ENCODE measurements at regions of chr22 and their contacts with region 1.

Region 1: GRCh38 chr22:40346178-40347118 is at the start of gene ADSL:
- DNase-seq: peak; percentile 90
- ATAC-seq: peak; percentile 92
- H3K4me3 Mint-ChIP-seq: peak within 1 kb of the TSS; percentile 99
- H3K27ac Mint-ChIP-seq: peak within 1 kb of the TSS; percentile 99
- H3K4me1 Mint-ChIP-seq: peaks cover 50% of the 10 kb centered on the region
- H3K27me3 Mint-ChIP-seq: no peaks in the 10 kb centered on the region
- total RNA-seq, gene ADSL: 98.3 to 109 TPM

Region 2: GRCh38 chr22:40036591-40037225 is 309.7 kb before region 1 on chr22:
- CTCF ChIA-PET with region 1: interaction called, 16 read pairs
- DNase-seq: peak; percentile 71
- ATAC-seq: peak; percentile 84
- H3K4me3 Mint-ChIP-seq: no peak overlapping the region
- H3K27ac Mint-ChIP-seq: no peak overlapping the region
- H3K4me1 Mint-ChIP-seq: peaks cover 7% of the 10 kb centered on the region
- H3K27me3 Mint-ChIP-seq: peaks cover 22% of the 10 kb centered on the region

Region 3: DNA sequence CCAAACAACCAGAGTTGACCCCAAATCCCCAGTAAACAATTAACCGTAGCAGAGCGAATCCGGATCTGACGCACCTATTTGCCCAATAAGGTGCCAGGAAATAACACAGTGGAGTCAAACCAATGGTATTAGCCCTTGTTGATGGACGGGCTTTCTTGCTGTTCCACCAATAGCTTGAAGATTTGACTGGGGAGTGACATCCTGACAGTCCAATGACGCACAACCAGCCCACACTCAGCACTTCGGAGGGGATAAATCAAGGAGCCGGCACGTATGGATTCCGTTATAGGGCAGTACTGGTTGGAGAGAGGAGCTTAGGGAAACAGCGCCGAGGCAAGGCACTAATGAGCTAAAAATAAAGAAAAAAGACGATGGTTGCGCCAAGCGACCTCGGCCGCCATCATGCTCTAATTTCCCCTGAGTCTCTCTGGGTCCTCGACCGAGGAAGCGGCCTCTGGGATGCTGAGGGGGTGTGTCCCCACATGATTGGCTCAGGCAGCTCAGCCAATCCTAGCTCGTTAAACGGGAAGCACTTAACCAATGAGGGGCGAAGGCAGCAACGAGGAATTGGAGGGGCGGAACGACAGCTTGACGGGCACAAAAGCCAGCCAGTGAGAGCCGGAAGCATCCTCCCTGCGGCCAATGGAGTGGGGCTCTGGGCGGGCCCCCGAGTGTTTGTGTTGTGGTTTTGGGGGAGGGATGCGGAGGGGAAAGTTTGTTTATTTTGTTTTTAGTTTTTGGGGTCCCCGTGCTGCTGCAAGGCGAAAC is 302.2 kb before region 1 on chr22:
- CTCF ChIA-PET with region 1: interaction called, 30 read pairs
- DNase-seq: peak; percentile 99
- ATAC-seq: peak; percentile 90
- H3K4me3 Mint-ChIP-seq: peak overlapping the region; percentile 84
- H3K27ac Mint-ChIP-seq: peak overlapping the region; percentile 97
- H3K4me1 Mint-ChIP-seq: peaks cover 37% of the 10 kb centered on the region
- H3K27me3 Mint-ChIP-seq: peaks cover 6% of the 10 kb centered on the region

Region 4: GRCh38 chr22:40107244-40107643 is 239.2 kb before region 1 on chr22:
- CTCF ChIA-PET with region 1: no interaction called
- DNase-seq: no peak
- ATAC-seq: peak; percentile 35
- H3K4me3 Mint-ChIP-seq: peak overlapping the region; percentile 67
- H3K27ac Mint-ChIP-seq: peak overlapping the region; percentile 92
- H3K4me1 Mint-ChIP-seq: peaks cover 50% of the 10 kb centered on the region
- H3K27me3 Mint-ChIP-seq: no peaks in the 10 kb centered on the region

Region 5: GRCh38 chr22:40300884-40301672 is 45.4 kb before region 1 on chr22:
- CTCF ChIA-PET with region 1: interaction called, 15 read pairs
- DNase-seq: no peak
- ATAC-seq: peak; percentile 69
- H3K4me3 Mint-ChIP-seq: no peak overlapping the region
- H3K27ac Mint-ChIP-seq: peak overlapping the region; percentile 61
- H3K4me1 Mint-ChIP-seq: peaks cover 24% of the 10 kb centered on the region
- H3K27me3 Mint-ChIP-seq: no peaks in the 10 kb centered on the region

Region 6: GRCh38 chr22:40323681-40324171 is 22.7 kb before region 1 on chr22:
- CTCF ChIA-PET with region 1: interaction called, 19 read pairs
- DNase-seq: peak; percentile 66
- ATAC-seq: peak; percentile 41
- H3K4me3 Mint-ChIP-seq: peak overlapping the region; percentile 72
- H3K27ac Mint-ChIP-seq: peak overlapping the region; percentile 96
- H3K4me1 Mint-ChIP-seq: peaks cover 57% of the 10 kb centered on the region
- H3K27me3 Mint-ChIP-seq: no peaks in the 10 kb centered on the region

Region 7: GRCh38 chr22:40334899-40335298 is 11.5 kb before region 1 on chr22:
- CTCF ChIA-PET with region 1: interaction called, 25 read pairs
- DNase-seq: no peak
- ATAC-seq: no peak
- H3K4me3 Mint-ChIP-seq: peak overlapping the region; percentile 9
- H3K27ac Mint-ChIP-seq: peak overlapping the region; percentile 80
- H3K4me1 Mint-ChIP-seq: peaks cover 71% of the 10 kb centered on the region
- H3K27me3 Mint-ChIP-seq: no peaks in the 10 kb centered on the region

Region 8: GRCh38 chr22:40533712-40534378 is 187.4 kb after region 1 on chr22:
- CTCF ChIA-PET with region 1: no interaction called
- DNase-seq: peak; percentile 81
- ATAC-seq: peak; percentile 89
- H3K4me3 Mint-ChIP-seq: peak overlapping the region; percentile 79
- H3K27ac Mint-ChIP-seq: peak overlapping the region; percentile 91
- H3K4me1 Mint-ChIP-seq: peaks cover 60% of the 10 kb centered on the region
- H3K27me3 Mint-ChIP-seq: no peaks in the 10 kb centered on the region

Measured in activated CD8-positive, alpha-beta memory T cell treated with anti-CD3 and anti-CD28 coated beads, Interleukin-2, amount 10 ng/mL, durations not matched to agents 7 days and 5 days (primary cell).